ENCODE measurements at regions of chr17 and their contacts with region 1.

Region 1: GRCh38 chr17:19648475-19649406 is at the start of gene ALDH3A2:
- DNase-seq: peak; percentile 96

Region 2: GRCh38 chr17:19362277-19363113 is 286.2 kb before region 1 on chr17 and contains the start of gene B9D1:
- CTCF ChIA-PET with region 1: interaction called, 4 read pairs
- POLR2A ChIA-PET with region 1: interaction called, 11 read pairs
- DNase-seq: peak; percentile 97

Region 3: GRCh38 chr17:19533718-19534561 is 114.8 kb before region 1 on chr17 and contains the start of gene SLC47A1:
- CTCF ChIA-PET with region 1: interaction called, 4 read pairs
- POLR2A ChIA-PET with region 1: interaction called, 31 read pairs
- DNase-seq: peak; percentile 72

Region 4: GRCh38 chr17:19630661-19631060 is 18.1 kb before region 1 on chr17:
- CTCF ChIA-PET with region 1: no interaction called
- POLR2A ChIA-PET with region 1: interaction called, 19 read pairs
- DNase-seq: no peak

Region 5: DNA sequence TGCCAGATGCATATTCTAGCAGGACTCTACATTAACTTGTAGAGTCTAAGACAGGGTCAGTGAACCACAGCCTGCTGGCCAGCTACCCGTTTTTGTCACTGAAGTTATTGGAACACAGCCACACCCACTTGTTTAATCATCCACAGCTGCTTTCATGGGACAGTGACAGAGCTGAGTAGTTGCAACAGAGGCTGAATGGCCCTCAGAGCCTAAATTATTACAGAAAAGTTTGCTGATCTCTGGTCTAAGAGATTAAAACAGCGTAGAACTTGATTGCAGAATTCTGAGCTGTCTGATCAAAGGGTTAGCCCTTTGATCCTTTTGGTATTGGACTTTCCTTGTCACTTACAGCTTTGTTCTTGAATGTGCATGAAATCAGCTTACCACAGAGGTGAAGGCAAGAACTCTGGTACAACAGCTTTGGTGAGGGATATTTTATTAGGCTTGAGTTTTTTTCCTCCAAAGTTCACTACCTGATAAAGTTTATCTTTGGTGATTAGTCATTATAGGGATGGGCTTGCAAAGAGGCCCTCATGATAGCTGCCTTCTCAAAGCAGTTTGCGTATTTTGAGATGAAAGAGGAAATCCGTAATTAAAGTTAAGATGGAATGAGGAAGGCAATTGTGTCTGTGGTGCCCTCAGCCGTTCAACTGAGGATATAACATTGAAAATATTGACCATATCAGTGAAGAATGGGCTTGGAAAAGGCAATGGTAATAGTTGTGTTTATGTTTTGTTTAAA is 23.4 kb after region 1 on chr17:
- CTCF ChIA-PET with region 1: no interaction called
- POLR2A ChIA-PET with region 1: interaction called, 19 read pairs
- DNase-seq: no peak

Region 6: GRCh38 chr17:19718604-19719354 is 70.0 kb after region 1 on chr17:
- CTCF ChIA-PET with region 1: interaction called, 3 read pairs
- POLR2A ChIA-PET with region 1: interaction called, 18 read pairs
- DNase-seq: peak; percentile 48

Region 7: GRCh38 chr17:19744922-19745757 is 96.4 kb after region 1 on chr17:
- CTCF ChIA-PET with region 1: interaction called, 13 read pairs
- POLR2A ChIA-PET with region 1: interaction called, 28 read pairs
- DNase-seq: peak; percentile 91

Measured in HEK293T (cell line).